OCI-LY7 (cell line): ENCODE measurements at regions of chr20 and their contacts with region 1.

Region 1: GRCh38 chr20:60403105-60403741 is 445.0 kb downstream of the CDH26 start:
- DNase-seq: peak; percentile 84
- H3K4me3 ChIP-seq: peak overlapping the region; percentile 49
- H3K27ac ChIP-seq: peak overlapping the region; percentile 93
- H3K4me1 ChIP-seq: peaks cover 49% of the 10 kb centered on the region
- CTCF ChIP-seq: no peak

Region 2: GRCh38 chr20:59940174-59940971 is 462.9 kb before region 1 on chr20 and contains the starts of genes FAM217B and PPP1R3D:
- CTCF ChIA-PET with region 1: no interaction called
- POLR2A ChIA-PET with region 1: no interaction called
- intact Hi-C with region 1: loop called (anchors 10 kb)
- DNase-seq: peak; percentile 92
- H3K4me3 ChIP-seq: peak within 1 kb of the TSS; percentile 92
- H3K27ac ChIP-seq: peak within 1 kb of the TSS; percentile 82
- H3K4me1 ChIP-seq: peaks cover 25% of the 10 kb centered on the region
- CTCF ChIP-seq: peak; percentile 34; the same call in 1 of the 2 replicates
- total RNA-seq, gene FAM217B: 16.1 and 18.0 TPM in 2 replicates
- total RNA-seq, gene PPP1R3D: 3.2 and 4.5 TPM in 2 replicates